ENCODE measurements at regions of chr13 and their contacts with region 1.

Region 1: DNA sequence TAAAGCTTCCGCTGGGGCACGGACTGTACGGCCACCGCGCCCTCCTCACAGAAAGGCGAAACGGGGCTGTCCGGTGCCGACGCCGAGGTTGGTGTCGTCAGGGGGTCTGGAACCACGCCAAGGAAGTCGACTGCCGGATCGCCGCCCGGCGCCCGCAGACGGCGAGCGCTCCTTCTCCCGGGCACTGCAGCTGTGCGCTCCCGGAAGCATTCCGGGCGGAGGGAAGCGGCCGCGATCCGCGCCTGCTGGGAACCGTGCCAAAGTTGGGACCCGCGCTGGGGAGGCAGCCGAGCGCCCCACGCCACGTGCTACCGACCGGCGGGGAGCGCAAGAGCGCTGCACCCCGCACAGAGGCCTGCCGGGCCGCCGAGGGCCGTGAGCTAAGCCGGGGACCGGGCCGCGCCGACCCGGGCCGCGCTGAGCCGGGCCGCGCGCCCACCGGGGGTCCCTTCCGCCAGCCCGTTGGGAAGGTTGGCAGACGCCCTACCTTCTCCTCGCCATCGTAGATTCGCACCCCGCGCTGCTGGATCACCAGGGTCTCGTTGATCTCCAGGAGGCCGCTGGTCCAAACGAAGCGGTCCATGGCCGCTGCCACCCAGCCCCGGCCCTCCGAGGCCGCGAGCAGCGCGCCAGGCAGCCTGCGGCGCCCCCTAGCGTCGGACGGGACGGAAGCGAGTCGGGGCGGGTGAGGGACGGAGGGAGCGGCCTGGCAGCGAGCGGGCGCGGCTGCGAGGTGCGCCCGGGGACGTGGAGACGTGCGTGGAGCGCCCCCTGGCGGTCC is at the start of gene VPS36:
- DNase-seq: peak; percentile 93 to 98
- H3K4me3 ChIP-seq: peak within 1 kb of the TSS; percentile 89
- H3K4me3 Mint-ChIP-seq: peak within 1 kb of the TSS; percentile 83
- H3K27ac Mint-ChIP-seq: peak within 1 kb of the TSS; percentile 69
- H3K4me1 ChIP-seq: no peaks in the 10 kb centered on the region; the same call in 1 of the 2 replicates
- H3K4me1 Mint-ChIP-seq: peaks cover 18% of the 10 kb centered on the region
- H3K27me3 ChIP-seq: no peaks in the 10 kb centered on the region
- H3K27me3 Mint-ChIP-seq: no peaks in the 10 kb centered on the region
- CTCF ChIP-seq: peak; percentile 92 to 98
- total RNA-seq, gene VPS36: 40.9 and 48.4 TPM in 2 replicates

Region 2: GRCh38 chr13:51803422-51804294 is 646.5 kb before region 1 on chr13 and contains the start of gene DHRS12:
- CTCF ChIA-PET with region 1: no interaction called
- POLR2A ChIA-PET with region 1: no interaction called
- intact Hi-C with region 1: loop called (anchors 10 kb)
- DNase-seq: peak; percentile 92 to 94
- H3K4me3 ChIP-seq: peak within 1 kb of the TSS; percentile 69
- H3K4me3 Mint-ChIP-seq: peak within 1 kb of the TSS; percentile 89
- H3K27ac Mint-ChIP-seq: peak within 1 kb of the TSS; percentile 94
- H3K4me1 ChIP-seq: peaks cover 8% of the 10 kb centered on the region; the same call in 1 of the 2 replicates
- H3K4me1 Mint-ChIP-seq: peaks cover 9% of the 10 kb centered on the region
- H3K27me3 ChIP-seq: no peaks in the 10 kb centered on the region
- H3K27me3 Mint-ChIP-seq: no peaks in the 10 kb centered on the region
- CTCF ChIP-seq: no peak
- total RNA-seq, gene DHRS12: 12.5 and 14.1 TPM in 2 replicates

Region 3: DNA sequence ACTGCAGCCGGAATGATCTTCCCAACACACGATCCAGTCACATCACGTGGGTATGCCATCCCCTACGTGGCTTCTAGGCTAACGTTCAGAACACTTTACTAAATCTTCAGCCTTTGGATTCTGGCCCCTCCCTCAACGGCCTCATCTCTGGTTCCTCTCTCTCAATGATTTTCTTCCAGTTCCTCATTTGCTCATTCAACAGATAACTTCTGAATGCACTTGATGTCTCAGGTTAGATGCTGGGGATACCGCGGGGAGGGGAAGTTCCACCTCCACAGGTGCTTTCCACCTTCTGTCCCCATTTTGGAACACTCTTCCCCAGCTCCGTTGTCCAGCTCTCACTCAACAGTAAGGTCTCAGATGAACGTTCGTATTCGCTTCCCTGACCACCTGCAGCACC is 505.1 kb before region 1 on chr13:
- CTCF ChIA-PET with region 1: no interaction called
- POLR2A ChIA-PET with region 1: no interaction called
- intact Hi-C with region 1: no loop called
- DNase-seq: peak in 1 of 2 experiments; percentile 11
- H3K4me3 ChIP-seq: no peak overlapping the region
- H3K4me3 Mint-ChIP-seq: no peak overlapping the region
- H3K27ac Mint-ChIP-seq: no peak overlapping the region
- H3K4me1 ChIP-seq: no peaks in the 10 kb centered on the region
- H3K4me1 Mint-ChIP-seq: no peaks in the 10 kb centered on the region
- H3K27me3 ChIP-seq: no peaks in the 10 kb centered on the region
- H3K27me3 Mint-ChIP-seq: no peaks in the 10 kb centered on the region
- CTCF ChIP-seq: no peak

Region 4: DNA sequence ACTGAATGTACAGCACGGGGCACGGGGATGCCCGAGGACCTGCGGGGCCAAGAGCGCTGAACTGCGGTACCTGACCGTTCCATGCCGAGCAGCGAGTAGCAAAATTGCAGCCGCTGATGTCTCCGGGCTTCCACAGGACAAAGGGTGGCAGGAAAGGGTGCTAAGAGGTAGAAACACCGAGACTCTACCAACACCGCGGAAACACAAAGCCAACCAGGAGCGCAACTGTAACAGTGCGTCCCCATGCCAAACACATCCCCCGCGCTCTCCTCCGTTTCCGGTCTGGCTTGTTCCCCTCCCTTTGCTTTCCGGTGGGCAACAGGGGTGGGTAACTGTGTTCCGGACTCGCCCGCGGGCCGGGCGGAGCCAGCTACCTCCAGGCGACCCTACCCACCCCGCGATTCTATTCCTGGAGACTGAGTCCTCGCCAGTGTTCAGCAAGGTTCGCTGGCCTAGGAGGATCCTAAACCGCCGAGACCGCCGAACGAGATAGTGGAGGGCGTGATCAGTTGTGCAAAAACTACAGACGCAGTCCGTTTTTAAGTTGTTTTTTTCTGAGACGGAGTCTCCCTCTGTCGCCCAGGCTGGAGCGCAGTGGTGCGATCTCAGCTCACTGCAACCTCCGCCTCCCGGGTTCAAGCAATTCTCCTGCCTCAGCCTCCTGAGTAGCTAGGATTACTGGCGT is 255.9 kb before region 1 on chr13:
- CTCF ChIA-PET with region 1: interaction called, 4 read pairs
- POLR2A ChIA-PET with region 1: no interaction called
- intact Hi-C with region 1: loop called (anchors 10 kb)
- DNase-seq: peak; percentile 91 to 94
- H3K4me3 ChIP-seq: peak overlapping the region; percentile 85
- H3K4me3 Mint-ChIP-seq: peak overlapping the region; percentile 94
- H3K27ac Mint-ChIP-seq: peak overlapping the region; percentile 88
- H3K4me1 ChIP-seq: peaks cover 6% of the 10 kb centered on the region; the same call in 1 of the 2 replicates
- H3K4me1 Mint-ChIP-seq: peaks cover 9% of the 10 kb centered on the region
- H3K27me3 ChIP-seq: no peaks in the 10 kb centered on the region
- H3K27me3 Mint-ChIP-seq: no peaks in the 10 kb centered on the region
- CTCF ChIP-seq: no peak

Region 5: GRCh38 chr13:52399708-52400107 is 50.5 kb before region 1 on chr13:
- CTCF ChIA-PET with region 1: interaction called, 3 read pairs
- POLR2A ChIA-PET with region 1: no interaction called
- intact Hi-C with region 1: loop called (anchors 1 kb)
- DNase-seq: peak in 1 of 2 experiments; percentile 12
- H3K4me3 ChIP-seq: no peak overlapping the region
- H3K4me3 Mint-ChIP-seq: no peak overlapping the region
- H3K27ac Mint-ChIP-seq: no peak overlapping the region
- H3K4me1 ChIP-seq: no peaks in the 10 kb centered on the region
- H3K4me1 Mint-ChIP-seq: no peaks in the 10 kb centered on the region
- H3K27me3 ChIP-seq: peaks cover 2% of the 10 kb centered on the region
- H3K27me3 Mint-ChIP-seq: peaks cover 26% of the 10 kb centered on the region
- CTCF ChIP-seq: peak in 1 of 2 experiments; percentile 8

Region 6: DNA sequence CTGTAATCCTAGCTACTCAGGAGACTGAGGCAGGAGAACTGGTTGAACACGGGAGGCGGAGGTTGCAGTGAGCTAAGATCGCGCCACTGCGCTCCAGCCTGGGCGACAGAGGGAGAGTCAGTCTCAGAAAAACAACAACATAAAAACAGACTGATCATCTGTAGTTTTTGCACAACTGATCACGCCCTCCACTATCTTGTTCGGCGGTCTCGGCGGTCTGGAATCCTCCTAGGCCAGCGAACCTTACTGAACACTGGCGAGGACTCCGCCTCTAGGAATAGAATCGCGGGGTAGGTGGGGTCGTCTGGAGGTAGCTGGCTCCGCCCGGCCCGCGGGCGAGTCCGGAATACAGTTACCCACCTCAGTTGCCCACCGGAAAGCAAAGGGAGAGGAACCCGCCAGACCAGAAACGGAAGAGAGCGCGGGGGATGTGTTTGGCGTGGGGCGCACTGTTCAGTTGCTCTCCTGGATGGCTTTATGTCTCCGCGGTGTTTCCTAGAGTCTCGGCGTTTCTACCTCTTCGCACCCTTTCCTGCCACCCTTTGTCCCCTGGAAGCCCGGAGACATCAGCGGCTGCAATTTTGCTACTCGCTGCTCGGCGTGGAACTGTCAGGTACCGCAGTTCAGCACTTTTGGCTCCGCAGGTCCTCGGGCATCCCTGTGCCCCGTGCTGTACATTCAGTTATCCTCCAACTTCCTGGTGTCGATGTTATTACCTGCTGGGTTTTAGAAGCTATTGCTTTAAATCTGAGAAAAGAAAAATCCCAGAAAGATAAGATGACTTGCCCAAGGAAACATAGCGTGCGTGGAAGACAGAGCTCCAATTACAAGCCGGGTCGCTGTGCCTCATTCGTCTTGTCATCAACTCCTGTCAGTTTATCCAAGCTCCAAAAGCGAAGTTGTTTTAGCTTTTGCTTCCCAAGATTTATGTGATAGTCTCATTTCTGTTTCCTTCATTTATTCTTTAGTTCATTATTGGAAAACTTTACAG is 167.2 kb after region 1 on chr13:
- CTCF ChIA-PET with region 1: no interaction called
- POLR2A ChIA-PET with region 1: no interaction called
- intact Hi-C with region 1: loop called (anchors 10 kb)
- DNase-seq: peak; percentile 89
- H3K4me3 ChIP-seq: peak overlapping the region; percentile 68
- H3K4me3 Mint-ChIP-seq: peak overlapping the region; percentile 100
- H3K27ac Mint-ChIP-seq: peak overlapping the region; percentile 87
- H3K4me1 ChIP-seq: no peaks in the 10 kb centered on the region
- H3K4me1 Mint-ChIP-seq: no peaks in the 10 kb centered on the region
- H3K27me3 ChIP-seq: no peaks in the 10 kb centered on the region
- H3K27me3 Mint-ChIP-seq: no peaks in the 10 kb centered on the region
- CTCF ChIP-seq: no peak

Measured in Caco-2 (cell line).